CD8-positive, alpha-beta memory T cell (primary cell): ENCODE measurements at regions of chr1 and their contacts with region 1.

Region 1: GRCh38 chr1:6343506-6344405 is 49.8 kb downstream of the ACOT7 start:
- DNase-seq: peak; percentile 39 to 65 (median 44)
- H3K4me3 ChIP-seq: no peak overlapping the region
- H3K4me3 Mint-ChIP-seq: no peak overlapping the region
- H3K27ac ChIP-seq: no peak overlapping the region
- H3K27ac Mint-ChIP-seq: peak overlapping the region in 3 of 8 donors; percentile 3 to 66 (median 54)
- H3K4me1 ChIP-seq: peaks cover 13% of the 10 kb centered on the region
- H3K4me1 Mint-ChIP-seq: peaks cover 11 to 12% (median 12%) of the 10 kb centered on the region in 3 donors
- H3K27me3 ChIP-seq: no peaks in the 10 kb centered on the region
- H3K27me3 Mint-ChIP-seq: no peaks in the 10 kb centered on the region

Region 2: GRCh38 chr1:6245086-6245868 is 98.5 kb before region 1 on chr1:
- CTCF ChIA-PET with region 1: interaction called, 13 read pairs
- POLR2A ChIA-PET with region 1: no interaction called
- DNase-seq: peak; percentile 70 to 85 (median 72)
- H3K4me3 ChIP-seq: peak overlapping the region; percentile 19
- H3K4me3 Mint-ChIP-seq: no peak overlapping the region
- H3K27ac ChIP-seq: no peak overlapping the region
- H3K27ac Mint-ChIP-seq: no peak overlapping the region
- H3K4me1 ChIP-seq: peaks cover 20% of the 10 kb centered on the region
- H3K4me1 Mint-ChIP-seq: peaks cover 8 to 29% (median 11%) of the 10 kb centered on the region in 3 donors
- H3K27me3 ChIP-seq: peaks cover 62% of the 10 kb centered on the region
- H3K27me3 Mint-ChIP-seq: peaks cover 49 to 61% of the 10 kb centered on the region in 2 donors

Region 3: GRCh38 chr1:6317098-6317760 is 26.5 kb before region 1 on chr1:
- CTCF ChIA-PET with region 1: no interaction called
- POLR2A ChIA-PET with region 1: no interaction called
- DNase-seq: no peak
- H3K4me3 ChIP-seq: no peak overlapping the region
- H3K4me3 Mint-ChIP-seq: no peak overlapping the region
- H3K27ac ChIP-seq: peak overlapping the region; percentile 61
- H3K27ac Mint-ChIP-seq: no peak overlapping the region
- H3K4me1 ChIP-seq: no peaks in the 10 kb centered on the region
- H3K4me1 Mint-ChIP-seq: no peaks in the 10 kb centered on the region
- H3K27me3 ChIP-seq: no peaks in the 10 kb centered on the region
- H3K27me3 Mint-ChIP-seq: no peaks in the 10 kb centered on the region

Region 4: DNA sequence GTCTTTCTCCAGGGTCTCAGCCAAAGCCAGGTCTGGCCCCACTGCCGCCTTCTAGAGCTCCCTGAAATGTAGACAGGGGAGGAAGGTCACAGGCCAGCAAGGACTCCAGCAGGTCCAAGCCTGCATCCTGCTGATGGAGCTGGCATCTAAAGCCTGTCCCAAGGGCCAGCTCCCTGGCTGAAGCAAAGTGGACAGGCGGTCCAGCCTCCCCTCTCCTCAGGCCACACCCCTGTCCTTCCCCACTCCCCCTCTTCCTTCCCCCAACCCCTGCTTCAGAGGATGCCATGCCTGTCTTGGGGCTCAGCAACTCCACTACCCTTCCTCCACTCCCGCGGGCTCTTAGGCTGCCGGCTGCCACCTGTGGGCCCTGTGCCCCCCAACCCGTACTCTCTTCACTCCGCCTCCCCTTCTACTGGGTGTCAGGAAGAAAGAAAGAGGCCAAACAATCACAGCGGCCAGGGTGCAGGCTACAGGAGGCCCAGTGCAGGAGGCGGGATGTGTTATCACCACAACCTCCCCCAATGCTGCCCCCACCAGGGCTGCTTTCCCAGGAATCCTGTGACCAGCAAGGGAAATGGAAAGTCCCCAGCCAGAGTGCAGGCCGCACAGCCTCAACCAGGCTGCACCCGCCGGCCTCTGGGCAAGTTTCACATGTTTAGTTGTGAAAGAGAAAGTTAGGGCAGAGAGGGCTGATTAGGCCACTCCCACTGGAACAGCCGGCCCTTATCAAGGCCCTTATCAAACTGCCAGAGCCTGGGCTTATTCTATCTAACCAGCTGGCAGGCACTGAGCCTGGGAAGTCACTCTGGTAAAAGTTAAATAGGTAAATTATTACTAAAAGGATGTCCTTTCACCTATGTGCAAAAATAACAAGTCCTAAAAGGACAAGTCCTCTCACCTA is 15.7 kb after region 1 on chr1:
- CTCF ChIA-PET with region 1: interaction called, 32 read pairs
- POLR2A ChIA-PET with region 1: interaction called, 7 read pairs
- DNase-seq: peak; percentile 23 to 73 (median 45)
- H3K4me3 ChIP-seq: peak overlapping the region; percentile 41
- H3K4me3 Mint-ChIP-seq: peak overlapping the region; percentile 55 to 92 (median 75)
- H3K27ac ChIP-seq: peak overlapping the region; percentile 69
- H3K27ac Mint-ChIP-seq: peak overlapping the region; percentile 88 to 97 (median 92)
- H3K4me1 ChIP-seq: peaks cover 41% of the 10 kb centered on the region
- H3K4me1 Mint-ChIP-seq: peaks cover 32 to 55% (median 38%) of the 10 kb centered on the region in 3 donors
- H3K27me3 ChIP-seq: no peaks in the 10 kb centered on the region
- H3K27me3 Mint-ChIP-seq: no peaks in the 10 kb centered on the region

Region 5: DNA sequence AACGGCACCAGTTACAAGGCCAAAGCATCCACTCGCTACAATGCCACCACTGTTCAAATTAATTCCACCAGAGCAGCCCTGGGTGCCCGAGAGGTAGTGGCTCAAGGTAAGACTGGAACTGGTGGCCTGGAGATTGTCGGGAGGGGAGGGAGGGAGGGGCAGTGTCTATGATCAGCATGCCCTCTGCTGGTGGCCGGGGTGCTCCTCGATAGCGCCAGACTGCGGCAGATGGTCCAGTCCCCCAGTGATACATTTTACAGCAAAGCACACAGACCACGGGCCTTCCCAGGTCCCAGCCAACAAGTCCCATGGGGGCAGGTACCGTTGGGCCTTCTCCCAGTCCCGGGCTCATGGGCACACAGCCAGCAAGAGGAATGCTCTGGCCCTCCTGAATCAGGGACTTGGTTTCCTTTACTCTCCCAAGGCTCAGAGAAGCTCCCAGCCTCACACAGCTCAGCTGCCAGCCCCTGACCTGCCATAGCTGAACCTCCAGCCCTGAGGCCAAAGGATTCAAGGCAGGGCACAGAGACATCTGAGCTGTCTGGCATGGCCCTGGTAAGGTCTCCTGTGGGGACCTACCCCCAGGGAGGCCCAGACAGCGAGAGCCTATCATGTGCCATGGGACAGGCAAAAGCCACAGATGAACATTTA is 34.5 kb after region 1 on chr1:
- CTCF ChIA-PET with region 1: interaction called, 10 read pairs
- POLR2A ChIA-PET with region 1: interaction called, 3 read pairs
- DNase-seq: no peak
- H3K4me3 ChIP-seq: no peak overlapping the region
- H3K4me3 Mint-ChIP-seq: no peak overlapping the region
- H3K27ac ChIP-seq: no peak overlapping the region
- H3K27ac Mint-ChIP-seq: no peak overlapping the region
- H3K4me1 ChIP-seq: no peaks in the 10 kb centered on the region
- H3K4me1 Mint-ChIP-seq: no peaks in the 10 kb centered on the region
- H3K27me3 ChIP-seq: no peaks in the 10 kb centered on the region
- H3K27me3 Mint-ChIP-seq: peaks cover 0 to 2% of the 10 kb centered on the region in 2 donors

Region 6: GRCh38 chr1:6393400-6394187 is 49.8 kb after region 1 on chr1 and contains the start of gene ACOT7:
- CTCF ChIA-PET with region 1: interaction called, 23 read pairs
- POLR2A ChIA-PET with region 1: interaction called, 9 read pairs
- DNase-seq: peak; percentile 86 to 92 (median 89)
- H3K4me3 ChIP-seq: peak within 1 kb of the TSS; percentile 75
- H3K4me3 Mint-ChIP-seq: peak within 1 kb of the TSS; percentile 85 to 98 (median 89)
- H3K27ac ChIP-seq: peak within 1 kb of the TSS; percentile 86
- H3K27ac Mint-ChIP-seq: peak within 1 kb of the TSS; percentile 91 to 99 (median 95)
- H3K4me1 ChIP-seq: peaks cover 26% of the 10 kb centered on the region
- H3K4me1 Mint-ChIP-seq: peaks cover 16 to 24% (median 24%) of the 10 kb centered on the region in 3 donors
- H3K27me3 ChIP-seq: no peaks in the 10 kb centered on the region
- H3K27me3 Mint-ChIP-seq: no peaks in the 10 kb centered on the region
- total RNA-seq, gene ACOT7: 109 TPM

Region 7: GRCh38 chr1:6401673-6402072 is 57.9 kb after region 1 on chr1:
- CTCF ChIA-PET with region 1: interaction called, 29 read pairs
- POLR2A ChIA-PET with region 1: interaction called, 9 read pairs
- DNase-seq: no peak
- H3K4me3 ChIP-seq: no peak overlapping the region
- H3K4me3 Mint-ChIP-seq: no peak overlapping the region
- H3K27ac ChIP-seq: no peak overlapping the region
- H3K27ac Mint-ChIP-seq: no peak overlapping the region
- H3K4me1 ChIP-seq: no peaks in the 10 kb centered on the region
- H3K4me1 Mint-ChIP-seq: peaks cover 0 to 4% (median 3%) of the 10 kb centered on the region in 3 donors
- H3K27me3 ChIP-seq: no peaks in the 10 kb centered on the region
- H3K27me3 Mint-ChIP-seq: peaks cover 11% of the 10 kb centered on the region in 2 donors